CD8-positive, alpha-beta T cell (primary cell): ENCODE measurements at regions of chr16 and their contacts with region 1.

Region 1: DNA sequence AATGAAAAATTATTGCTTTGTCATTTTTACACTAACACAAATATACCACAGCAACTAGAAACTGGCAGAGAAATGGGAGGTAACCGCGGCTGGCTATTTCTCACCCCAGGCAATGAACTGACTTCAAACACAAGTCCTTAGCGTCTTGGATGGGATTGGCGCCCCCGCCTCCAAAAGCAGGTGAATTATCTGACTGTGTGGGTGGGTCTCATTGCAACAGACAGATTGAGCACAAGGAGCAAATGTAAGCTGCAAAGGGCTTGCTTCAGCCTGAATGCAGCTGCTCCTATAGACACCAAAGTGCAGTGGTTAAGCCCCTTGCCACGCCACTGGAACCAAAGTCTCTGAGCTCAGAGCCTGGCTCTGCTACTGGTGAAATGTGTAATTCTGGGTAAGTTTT is 225.0 kb downstream of the XYLT1 start:
- DNase-seq: no peak
- ATAC-seq: no peak
- H3K4me3 ChIP-seq: no peak overlapping the region
- H3K4me3 Mint-ChIP-seq: no peak overlapping the region
- H3K27ac ChIP-seq: no peak overlapping the region
- H3K27ac Mint-ChIP-seq: no peak overlapping the region
- H3K4me1 ChIP-seq: no peaks in the 10 kb centered on the region
- H3K4me1 Mint-ChIP-seq: peaks cover 14% of the 10 kb centered on the region
- H3K27me3 ChIP-seq: no peaks in the 10 kb centered on the region
- H3K27me3 Mint-ChIP-seq: no peaks in the 10 kb centered on the region
- CTCF ChIP-seq: no peak

Region 2: DNA sequence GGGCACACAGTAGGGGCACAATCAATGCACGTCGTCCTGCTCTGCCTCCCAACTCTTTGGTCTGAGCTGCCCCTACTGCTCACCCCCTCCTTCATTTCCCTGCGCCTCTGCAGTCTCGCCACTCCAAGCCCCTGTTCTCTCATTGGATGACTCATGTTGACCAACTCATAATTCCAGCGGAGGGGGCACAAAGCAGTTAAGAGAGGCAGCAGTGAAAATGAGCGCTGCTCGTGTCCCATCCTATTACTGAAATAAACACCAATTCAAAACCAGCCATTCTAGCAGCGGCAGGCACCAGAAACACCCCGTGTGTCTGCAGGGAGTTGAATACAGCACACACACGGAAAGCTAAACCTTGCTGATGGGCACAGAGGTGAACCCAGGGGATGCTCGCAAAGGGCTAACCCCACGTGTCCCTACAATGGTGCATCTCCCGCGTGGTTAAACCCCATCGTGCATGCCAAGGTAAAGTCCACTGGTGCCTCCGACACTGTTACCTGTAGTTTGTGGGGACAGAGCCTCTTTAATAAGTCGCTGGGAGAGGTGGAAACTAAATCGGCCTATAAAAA is 85.4 kb before region 1 on chr16:
- CTCF ChIA-PET with region 1: no interaction called
- POLR2A ChIA-PET with region 1: no interaction called
- intact Hi-C with region 1: no loop called
- DNase-seq: no peak
- ATAC-seq: no peak
- H3K4me3 ChIP-seq: no peak overlapping the region
- H3K4me3 Mint-ChIP-seq: no peak overlapping the region
- H3K27ac ChIP-seq: no peak overlapping the region
- H3K27ac Mint-ChIP-seq: no peak overlapping the region
- H3K4me1 ChIP-seq: no peaks in the 10 kb centered on the region
- H3K4me1 Mint-ChIP-seq: no peaks in the 10 kb centered on the region
- H3K27me3 ChIP-seq: no peaks in the 10 kb centered on the region
- H3K27me3 Mint-ChIP-seq: no peaks in the 10 kb centered on the region
- CTCF ChIP-seq: no peak

Region 3: DNA sequence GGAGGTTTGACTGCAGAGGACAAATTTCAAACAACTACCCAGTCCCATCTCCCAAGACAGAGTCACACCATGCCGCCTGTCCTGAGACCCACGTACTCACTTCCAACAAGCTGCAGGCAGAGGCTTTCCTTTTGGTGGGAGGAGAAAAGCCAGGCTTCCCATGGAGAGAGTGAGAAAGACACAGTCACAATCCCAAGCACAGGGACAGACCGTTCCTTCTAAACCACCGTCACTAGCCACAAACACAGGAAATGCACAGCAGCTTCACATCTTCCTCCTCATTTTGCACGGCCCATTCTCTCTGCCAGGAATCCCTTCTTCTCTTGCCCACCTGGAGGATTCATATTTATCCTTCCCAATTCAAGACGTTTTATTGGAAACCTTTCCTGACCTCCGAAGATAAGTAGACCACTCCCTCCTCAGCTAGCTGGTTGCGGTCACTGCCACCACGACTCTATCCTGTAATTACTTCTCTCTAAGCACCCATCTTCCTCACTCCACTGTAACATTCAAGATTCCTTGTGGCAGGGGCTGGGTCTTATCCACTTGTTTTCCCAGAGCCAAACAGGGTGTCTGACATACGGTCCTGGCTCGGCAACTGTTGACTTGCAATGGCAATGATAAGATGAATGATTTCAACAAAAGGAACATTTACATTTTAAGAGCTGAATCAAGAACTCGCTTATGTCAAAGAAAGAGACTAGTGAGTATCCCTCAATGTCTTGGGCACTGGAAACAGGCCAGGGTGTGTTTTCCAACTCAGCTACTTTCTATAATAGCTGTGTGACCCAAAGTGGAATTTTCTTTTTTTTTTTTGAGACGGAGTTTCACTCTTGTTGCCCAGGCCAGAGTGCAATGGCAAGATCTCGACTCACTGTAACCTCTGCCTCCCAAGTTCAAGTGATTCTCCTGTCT is 137.4 kb after region 1 on chr16:
- CTCF ChIA-PET with region 1: no interaction called
- POLR2A ChIA-PET with region 1: no interaction called
- intact Hi-C with region 1: no loop called
- DNase-seq: peak in 2 of 9 experiments; percentile 31 to 64
- ATAC-seq: peak; percentile 36
- H3K4me3 ChIP-seq: no peak overlapping the region
- H3K4me3 Mint-ChIP-seq: peak overlapping the region; percentile 53
- H3K27ac ChIP-seq: no peak overlapping the region
- H3K27ac Mint-ChIP-seq: no peak overlapping the region
- H3K4me1 ChIP-seq: peaks cover 18% of the 10 kb centered on the region
- H3K4me1 Mint-ChIP-seq: peaks cover 65% of the 10 kb centered on the region
- H3K27me3 ChIP-seq: no peaks in the 10 kb centered on the region
- H3K27me3 Mint-ChIP-seq: no peaks in the 10 kb centered on the region
- CTCF ChIP-seq: no peak

Region 4: GRCh38 chr16:17658881-17659280 is 413.1 kb after region 1 on chr16:
- CTCF ChIA-PET with region 1: no interaction called
- POLR2A ChIA-PET with region 1: no interaction called
- intact Hi-C with region 1: loop called in 1 of 2 experiments (anchors 5 kb)
- DNase-seq: no peak
- ATAC-seq: no peak
- H3K4me3 ChIP-seq: no peak overlapping the region
- H3K4me3 Mint-ChIP-seq: no peak overlapping the region
- H3K27ac ChIP-seq: no peak overlapping the region
- H3K27ac Mint-ChIP-seq: no peak overlapping the region
- H3K4me1 ChIP-seq: no peaks in the 10 kb centered on the region
- H3K4me1 Mint-ChIP-seq: no peaks in the 10 kb centered on the region
- H3K27me3 ChIP-seq: no peaks in the 10 kb centered on the region
- H3K27me3 Mint-ChIP-seq: peaks cover 5% of the 10 kb centered on the region
- CTCF ChIP-seq: no peak